Uterus (tissue), 4 donors: ENCODE measurements at regions of chr1 and their contacts with region 1.

Region 1: DNA sequence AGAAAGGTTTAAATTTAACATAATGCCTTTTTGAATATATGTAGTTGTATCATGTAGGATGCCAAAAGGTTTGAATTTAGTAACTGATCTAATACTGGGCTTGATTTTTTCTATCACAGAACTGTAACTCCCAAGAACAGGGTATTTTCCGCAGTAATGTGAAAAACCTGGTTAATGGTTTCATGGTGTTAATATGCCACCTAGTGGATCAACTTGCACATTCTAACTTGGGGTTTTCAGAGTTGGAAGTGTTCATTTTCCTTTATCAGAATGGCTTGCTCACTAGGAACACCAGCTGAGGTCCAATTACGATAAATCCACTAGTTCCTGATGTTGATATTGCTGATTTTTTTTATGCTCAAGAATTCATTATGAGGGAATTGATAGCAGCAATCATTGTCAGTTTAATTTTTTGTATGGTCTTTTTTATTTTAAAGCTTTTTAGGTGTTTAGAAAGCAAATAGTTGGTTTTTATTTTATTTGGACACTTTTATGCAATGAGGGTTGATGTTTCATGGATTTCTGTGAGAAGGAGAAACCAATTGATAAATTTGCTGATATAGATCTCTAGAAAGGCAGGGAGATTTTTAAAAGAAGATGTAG is 157.2 kb downstream of the PLA2G4A start:
- DNase-seq: no peak
- H3K4me3 ChIP-seq: no peak overlapping the region
- H3K27ac ChIP-seq: no peak overlapping the region
- H3K4me1 ChIP-seq: no peaks in the 10 kb centered on the region
- H3K27me3 ChIP-seq: no peaks in the 10 kb centered on the region
- CTCF ChIP-seq: peak; percentile 65 to 80 (median 68)
- POLR2A ChIP-seq: no peak

Region 2: GRCh38 chr1:186482661-186483255 is 503.2 kb before region 1 on chr1:
- intact Hi-C with region 1: loop called (anchors 10 kb)
- DNase-seq: peak; percentile 43 to 50
- H3K4me3 ChIP-seq: no peak overlapping the region
- H3K27ac ChIP-seq: no peak overlapping the region
- H3K4me1 ChIP-seq: peaks cover 0 to 3% of the 10 kb centered on the region in 2 donors
- H3K27me3 ChIP-seq: no peaks in the 10 kb centered on the region
- CTCF ChIP-seq: peak; percentile 63 to 73 (median 66)
- POLR2A ChIP-seq: no peak

Region 3: GRCh38 chr1:187051618-187052232 is 65.7 kb after region 1 on chr1:
- intact Hi-C with region 1: no loop called
- DNase-seq: no peak
- H3K4me3 ChIP-seq: no peak overlapping the region
- H3K27ac ChIP-seq: no peak overlapping the region
- H3K4me1 ChIP-seq: no peaks in the 10 kb centered on the region
- H3K27me3 ChIP-seq: no peaks in the 10 kb centered on the region
- CTCF ChIP-seq: peak in 2 of 4 experiments; percentile 3 to 35
- POLR2A ChIP-seq: no peak